ENCODE measurements at regions of chr13 and their contacts with region 1.

Region 1: GRCh38 chr13:75402787-75403186 is 79.2 kb downstream of the TBC1D4 start:
- DNase-seq: peak; percentile 32 to 71
- ATAC-seq: peak; percentile 48 to 94 (median 82)
- H3K4me3 ChIP-seq: peak overlapping the region in 4 of 10 donors; percentile 8 to 27 (median 15)
- H3K27ac ChIP-seq: peak overlapping the region; percentile 15 to 81 (median 66)
- H3K4me1 ChIP-seq: peaks cover 0 to 65% (median 40%) of the 10 kb centered on the region in 9 donors
- H3K27me3 ChIP-seq: no peaks in the 10 kb centered on the region
- CTCF ChIP-seq: no peak

Region 2: GRCh38 chr13:75341028-75341427 is 61.8 kb before region 1 on chr13:
- intact Hi-C with region 1: no loop called
- DNase-seq: no peak
- ATAC-seq: no peak
- H3K4me3 ChIP-seq: no peak overlapping the region
- H3K27ac ChIP-seq: no peak overlapping the region
- H3K4me1 ChIP-seq: no peaks in the 10 kb centered on the region
- H3K27me3 ChIP-seq: no peaks in the 10 kb centered on the region
- CTCF ChIP-seq: no peak

Region 3: GRCh38 chr13:75437582-75438318 is 35.0 kb after region 1 on chr13:
- intact Hi-C with region 1: loop called in 2 of 10 experiments (anchors 5 kb)
- DNase-seq: peak in 1 of 2 donors; percentile 26
- ATAC-seq: peak; percentile 50 to 73 (median 62)
- H3K4me3 ChIP-seq: peak overlapping the region in 1 of 10 donors; percentile 0
- H3K27ac ChIP-seq: peak overlapping the region in 8 of 10 donors; percentile 21 to 77 (median 58)
- H3K4me1 ChIP-seq: peaks cover 0 to 58% (median 33%) of the 10 kb centered on the region in 9 donors
- H3K27me3 ChIP-seq: no peaks in the 10 kb centered on the region
- CTCF ChIP-seq: no peak

Measured in heart right ventricle (tissue), 16 donors.